ENCODE measurements at regions of chr12 and their contacts with region 1.

Region 1: DNA sequence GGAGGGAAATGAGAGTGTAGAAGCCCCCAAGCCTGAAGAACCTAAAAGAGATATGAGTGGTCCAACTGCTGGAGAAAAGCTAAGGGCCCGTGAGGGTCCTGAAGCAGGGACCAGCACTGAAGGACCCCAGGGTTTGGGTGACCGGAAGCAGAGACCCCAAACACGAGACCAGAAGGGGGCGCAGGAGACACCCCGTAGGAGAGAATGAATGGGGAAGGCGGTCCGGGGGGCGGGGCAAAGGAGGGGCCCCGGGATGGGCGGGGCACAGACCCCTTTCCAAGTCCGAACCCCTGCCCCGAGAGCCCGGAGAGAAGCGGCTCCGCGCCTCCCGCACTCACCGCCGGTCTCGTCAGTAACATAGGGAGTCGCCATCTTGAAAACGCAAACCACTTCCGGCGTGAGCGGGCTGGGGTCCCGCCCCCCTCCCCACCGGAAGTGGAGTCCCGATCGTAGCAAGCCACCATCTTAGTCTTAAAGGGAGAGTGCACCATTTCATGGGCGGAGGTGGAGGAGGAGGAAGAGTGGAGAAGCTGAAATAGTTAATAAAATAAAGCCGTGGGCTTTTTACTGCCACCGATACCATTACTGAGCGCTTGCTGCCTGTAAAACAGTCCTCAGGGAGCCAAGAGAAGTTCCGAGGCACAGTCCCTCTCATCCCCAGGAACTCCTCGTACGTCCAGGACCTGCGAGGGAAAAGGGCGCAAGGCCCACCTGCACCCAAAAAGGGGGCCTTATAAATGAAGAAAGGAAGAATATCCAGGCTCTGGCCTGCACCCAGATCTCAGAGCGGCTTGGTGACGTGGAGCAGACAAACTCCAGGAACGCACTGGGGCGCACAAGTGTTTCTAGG is 731 bp downstream of the PYM1 start:
- DNase-seq: peak; percentile 87 to 96
- ATAC-seq: peak; percentile 63

Region 2: DNA sequence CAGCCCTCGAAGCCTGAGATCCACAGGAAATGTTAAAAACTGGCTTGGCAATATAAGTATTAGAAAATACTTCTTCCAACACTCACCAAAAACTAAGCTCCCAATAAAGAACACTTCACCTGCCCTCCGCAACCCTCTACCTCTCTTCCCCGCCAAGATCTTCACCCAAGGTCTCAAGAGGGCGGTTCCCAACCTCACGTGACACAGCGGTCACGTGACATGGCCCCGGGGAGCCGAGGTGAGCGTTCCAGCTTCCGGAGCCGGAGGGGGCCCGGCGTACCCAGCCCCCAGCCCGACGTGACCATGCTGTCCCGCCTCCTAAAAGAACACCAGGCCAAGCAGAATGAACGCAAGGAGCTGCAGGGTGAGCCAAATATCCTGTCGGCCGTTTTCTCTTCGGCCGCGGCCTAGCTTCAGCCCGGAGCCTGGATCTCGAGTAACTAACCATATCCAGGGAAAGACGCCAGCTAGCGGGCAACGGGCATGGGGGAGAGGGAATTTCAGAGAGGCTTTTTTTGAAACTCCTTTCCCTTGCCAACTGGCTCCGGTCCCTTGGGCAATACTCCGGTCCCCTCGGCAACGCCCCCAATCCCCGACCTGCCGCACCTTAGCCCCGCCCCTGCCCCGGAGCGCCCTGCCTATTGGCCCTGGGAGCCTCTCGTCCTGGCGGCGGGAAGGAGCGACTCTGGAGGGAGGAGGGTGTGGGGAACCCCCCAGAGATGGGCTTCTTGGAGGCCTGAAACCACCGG is 211.0 kb before region 1 on chr12 and contains the start of gene BLOC1S1:
- intact Hi-C with region 1: no loop called
- DNase-seq: peak; percentile 95 to 96
- ATAC-seq: peak; percentile 69
- total RNA-seq, gene BLOC1S1: 266 to 300 TPM

Region 3: DNA sequence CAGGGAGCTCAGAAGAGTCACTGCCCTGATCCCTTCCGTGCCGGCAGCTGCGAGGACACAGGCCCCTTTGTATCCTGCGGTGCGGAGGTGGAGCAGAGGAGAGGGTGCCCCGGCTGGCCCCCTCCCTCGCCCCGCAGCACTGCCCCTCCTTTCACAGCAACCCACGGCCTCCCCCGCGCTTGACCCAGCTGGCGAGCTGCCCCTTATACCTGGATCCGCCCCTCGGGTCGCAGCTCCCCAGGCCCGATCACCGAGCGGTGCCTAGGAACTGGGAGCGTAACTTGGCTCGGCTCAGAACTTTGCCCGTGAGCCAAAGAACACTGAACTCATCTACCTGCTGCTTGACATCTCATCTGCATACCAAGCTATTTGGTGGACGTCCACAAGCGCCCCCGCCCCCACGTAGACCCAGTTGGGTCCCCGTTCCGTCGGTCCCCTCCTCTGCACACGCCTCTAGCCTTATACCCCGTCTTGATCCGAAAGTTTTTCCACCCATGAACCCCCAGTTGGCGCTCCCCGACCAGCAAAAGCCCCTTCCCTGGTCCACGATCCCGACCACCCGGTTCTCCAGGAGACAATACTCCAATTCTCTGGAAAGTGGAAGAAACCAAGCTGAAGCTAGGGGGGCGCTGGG is 96.9 kb before region 1 on chr12:
- intact Hi-C with region 1: loop called in 1 of 2 experiments (anchors 10 kb)
- DNase-seq: peak; percentile 57 to 70
- ATAC-seq: peak; percentile 45

Region 4: DNA sequence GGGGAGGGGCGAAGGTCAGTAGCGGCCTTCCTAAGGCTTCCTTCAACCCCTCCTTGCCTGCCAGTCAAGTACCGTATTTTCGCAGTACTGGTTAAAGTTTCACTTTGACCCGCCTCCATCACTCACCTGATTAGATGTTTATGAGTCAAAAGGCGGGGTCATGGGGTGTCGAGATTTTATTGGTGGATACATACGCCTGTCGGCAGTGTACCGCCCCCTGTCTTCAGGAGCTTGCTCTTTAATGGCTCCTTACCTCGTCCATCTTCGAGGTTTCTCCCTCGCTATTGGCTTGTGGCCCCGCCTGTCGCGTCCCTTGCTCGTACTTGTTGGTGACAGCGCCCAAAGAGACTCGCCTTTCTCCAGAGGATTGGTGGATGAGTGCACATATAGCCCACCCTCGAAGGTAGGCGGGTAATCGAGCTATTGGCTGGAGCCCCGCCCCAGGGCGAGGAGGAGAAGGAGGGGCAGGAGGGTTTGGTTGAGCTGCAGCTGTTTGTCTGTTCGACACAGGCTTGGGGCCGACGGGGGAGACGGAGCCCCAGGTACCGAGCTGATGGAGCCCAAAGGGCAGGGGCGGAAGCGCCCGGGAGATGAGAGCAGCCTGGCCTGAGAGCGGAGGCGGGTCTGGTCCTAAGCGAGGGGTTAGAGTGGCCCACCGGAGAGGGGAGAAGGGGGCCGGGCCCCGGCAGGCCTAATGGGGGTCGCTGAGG is 46.8 kb after region 1 on chr12 and contains the start of gene RAB5B:
- intact Hi-C with region 1: loop called in 1 of 2 experiments (anchors 5 kb)
- DNase-seq: peak; percentile 97 to 100
- ATAC-seq: peak; percentile 84
- total RNA-seq, gene RAB5B: 149 to 169 TPM

Region 5: DNA sequence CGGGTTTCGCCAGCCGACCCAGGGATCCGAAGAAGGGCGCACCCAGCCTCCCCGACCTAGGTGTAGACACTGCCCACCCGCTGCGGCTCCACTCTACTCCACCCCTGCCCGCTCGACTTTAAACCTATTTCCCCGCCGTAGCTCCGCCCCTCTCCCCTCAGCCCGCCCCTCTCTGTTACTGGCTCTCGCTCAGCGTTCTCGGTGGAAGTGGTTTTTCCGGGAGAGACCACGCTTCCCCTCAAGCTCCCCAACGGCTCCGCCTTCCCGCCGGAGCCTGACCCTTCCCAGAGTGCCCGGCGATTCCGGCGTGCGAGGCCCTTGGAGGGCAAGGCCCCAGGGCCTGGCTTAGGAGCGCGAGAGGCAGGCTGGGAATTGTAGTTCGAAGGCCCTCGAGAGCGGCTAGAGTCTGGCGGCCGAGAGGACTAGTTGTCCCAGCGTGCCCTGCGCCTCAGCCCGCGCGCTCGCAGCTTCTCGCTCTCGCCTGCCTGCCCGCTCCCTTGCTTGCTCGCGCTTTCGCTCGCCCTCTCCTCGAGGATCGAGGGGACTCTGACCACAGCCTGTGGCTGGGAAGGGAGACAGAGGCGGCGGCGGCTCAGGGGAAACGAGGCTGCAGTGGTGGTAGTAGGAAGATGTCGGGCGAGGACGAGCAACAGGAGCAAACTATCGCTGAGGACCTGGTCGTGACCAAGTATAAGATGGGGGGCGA is 177.3 kb after region 1 on chr12 and contains the start of gene PA2G4:
- intact Hi-C with region 1: no loop called
- DNase-seq: peak; percentile 97 to 99
- ATAC-seq: peak; percentile 88
- total RNA-seq, gene PA2G4: 59.6 to 80.9 TPM